ENCODE measurements at regions of chr10 and their contacts with region 1.

Region 1: DNA sequence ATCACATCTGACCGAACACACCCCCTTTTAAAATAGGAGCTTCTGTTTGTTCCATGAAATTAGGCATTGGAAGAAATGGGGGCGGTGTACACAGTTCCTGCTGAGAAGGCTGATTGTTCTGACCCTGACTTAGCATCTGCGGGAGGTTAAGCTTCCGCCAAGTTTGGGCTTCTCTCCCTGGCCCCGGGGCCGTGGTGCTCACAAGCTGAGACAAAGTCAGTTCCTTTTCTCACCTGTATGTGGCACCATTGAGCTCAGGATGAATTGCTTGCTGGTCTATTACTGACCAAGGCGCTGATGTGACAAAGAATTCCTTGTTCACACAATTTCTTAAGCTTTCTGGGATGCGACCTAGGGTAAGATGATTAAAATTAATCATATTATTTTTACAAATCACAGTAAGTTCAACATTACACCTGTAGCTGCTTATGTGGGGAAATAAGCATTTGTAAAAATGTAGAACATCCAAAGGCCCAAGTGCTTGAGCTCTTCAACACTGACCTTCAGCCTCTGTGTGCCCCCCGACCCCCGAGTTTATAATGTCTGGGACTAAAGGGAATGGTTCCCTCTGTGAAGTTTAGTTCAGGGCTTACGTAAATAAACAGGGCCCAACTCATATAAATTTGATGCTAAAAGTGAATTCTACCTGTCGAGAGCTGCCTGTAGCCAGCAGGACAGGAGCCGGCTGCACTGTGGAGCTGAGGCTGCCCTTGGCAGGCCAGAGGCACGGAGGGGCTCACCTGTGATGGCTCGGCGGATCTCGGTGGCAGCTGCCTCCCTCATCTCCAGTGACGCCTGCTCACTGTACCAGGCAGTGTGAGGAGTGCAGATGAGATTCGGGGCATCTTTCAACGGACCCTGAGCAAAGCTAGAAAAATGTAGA is 50.8 kb downstream of the ZRANB1 start:
- DNase-seq: peak; percentile 38 to 90
- ATAC-seq: peak; percentile 39 to 90 (median 76)
- H3K4me3 ChIP-seq: no peak overlapping the region
- H3K27ac ChIP-seq: peak overlapping the region in 1 of 10 donors; percentile 4
- H3K4me1 ChIP-seq: peaks cover 0 to 29% (median 5%) of the 10 kb centered on the region in 9 donors
- H3K27me3 ChIP-seq: no peaks in the 10 kb centered on the region
- CTCF ChIP-seq: peak; percentile 59 to 87 (median 79)

Region 2: DNA sequence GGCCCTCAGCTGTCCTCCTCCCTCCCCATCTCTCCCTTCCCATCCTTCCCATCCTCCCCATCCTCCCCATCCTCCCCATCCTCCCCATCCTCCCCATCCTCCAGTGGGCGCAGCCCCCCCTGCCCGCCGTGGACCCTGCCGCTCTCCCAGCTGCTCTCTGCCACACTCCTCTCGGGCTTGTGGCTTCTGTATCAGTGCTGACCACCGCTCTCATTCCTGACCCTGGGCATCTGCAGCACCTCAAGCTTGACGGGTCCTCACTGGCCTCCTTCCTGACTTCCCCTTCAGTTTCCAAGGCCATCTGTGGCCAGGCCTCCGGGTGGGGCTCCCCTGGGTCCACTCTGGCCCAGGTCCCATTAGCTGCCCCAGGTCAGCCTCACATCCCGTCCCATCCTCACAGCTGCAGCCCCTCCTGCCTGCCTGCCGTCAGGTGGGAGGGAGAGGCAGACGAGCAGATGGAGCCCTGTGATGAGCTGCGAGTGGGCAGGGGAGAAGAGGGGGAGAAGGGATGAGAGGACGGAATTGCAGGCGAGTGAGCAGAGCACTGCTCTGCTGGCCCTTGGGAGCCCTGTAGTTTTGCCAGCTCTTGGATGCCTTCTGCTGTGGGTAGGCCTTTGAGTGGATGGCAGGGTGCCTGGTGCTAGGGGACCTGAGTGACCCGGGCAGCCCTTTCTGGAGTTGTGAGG is 495.4 kb before region 1 on chr10:
- intact Hi-C with region 1: no loop called
- DNase-seq: peak; percentile 51 to 62
- ATAC-seq: peak; percentile 53 to 92 (median 84)
- H3K4me3 ChIP-seq: no peak overlapping the region
- H3K27ac ChIP-seq: no peak overlapping the region
- H3K4me1 ChIP-seq: peaks cover 0 to 5% (median 0%) of the 10 kb centered on the region in 9 donors
- H3K27me3 ChIP-seq: no peaks in the 10 kb centered on the region
- CTCF ChIP-seq: no peak

Region 3: DNA sequence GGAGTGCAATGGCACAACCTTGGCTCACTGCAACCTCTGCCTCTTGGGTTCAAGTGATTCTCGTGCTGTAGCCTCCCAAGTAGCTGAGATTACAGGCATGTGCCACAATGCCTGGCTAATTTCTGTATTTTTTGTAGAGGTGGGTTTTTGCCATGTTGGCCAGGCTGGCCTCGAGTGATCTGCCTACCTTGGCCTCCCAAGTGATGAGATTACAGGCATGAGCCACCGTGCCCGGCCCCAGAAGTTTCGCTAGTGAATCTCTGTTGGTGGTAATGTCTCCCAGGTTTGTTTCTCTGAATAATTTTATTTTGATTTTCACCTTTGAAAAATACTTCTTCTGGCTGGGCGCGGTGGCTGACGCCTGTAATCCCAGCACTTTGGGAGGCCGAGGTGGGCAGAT is 132.3 kb before region 1 on chr10:
- intact Hi-C with region 1: no loop called
- DNase-seq: no peak
- ATAC-seq: no peak
- H3K4me3 ChIP-seq: no peak overlapping the region
- H3K27ac ChIP-seq: no peak overlapping the region
- H3K4me1 ChIP-seq: peaks cover 0 to 14% (median 0%) of the 10 kb centered on the region in 9 donors
- H3K27me3 ChIP-seq: no peaks in the 10 kb centered on the region
- CTCF ChIP-seq: no peak

Region 4: DNA sequence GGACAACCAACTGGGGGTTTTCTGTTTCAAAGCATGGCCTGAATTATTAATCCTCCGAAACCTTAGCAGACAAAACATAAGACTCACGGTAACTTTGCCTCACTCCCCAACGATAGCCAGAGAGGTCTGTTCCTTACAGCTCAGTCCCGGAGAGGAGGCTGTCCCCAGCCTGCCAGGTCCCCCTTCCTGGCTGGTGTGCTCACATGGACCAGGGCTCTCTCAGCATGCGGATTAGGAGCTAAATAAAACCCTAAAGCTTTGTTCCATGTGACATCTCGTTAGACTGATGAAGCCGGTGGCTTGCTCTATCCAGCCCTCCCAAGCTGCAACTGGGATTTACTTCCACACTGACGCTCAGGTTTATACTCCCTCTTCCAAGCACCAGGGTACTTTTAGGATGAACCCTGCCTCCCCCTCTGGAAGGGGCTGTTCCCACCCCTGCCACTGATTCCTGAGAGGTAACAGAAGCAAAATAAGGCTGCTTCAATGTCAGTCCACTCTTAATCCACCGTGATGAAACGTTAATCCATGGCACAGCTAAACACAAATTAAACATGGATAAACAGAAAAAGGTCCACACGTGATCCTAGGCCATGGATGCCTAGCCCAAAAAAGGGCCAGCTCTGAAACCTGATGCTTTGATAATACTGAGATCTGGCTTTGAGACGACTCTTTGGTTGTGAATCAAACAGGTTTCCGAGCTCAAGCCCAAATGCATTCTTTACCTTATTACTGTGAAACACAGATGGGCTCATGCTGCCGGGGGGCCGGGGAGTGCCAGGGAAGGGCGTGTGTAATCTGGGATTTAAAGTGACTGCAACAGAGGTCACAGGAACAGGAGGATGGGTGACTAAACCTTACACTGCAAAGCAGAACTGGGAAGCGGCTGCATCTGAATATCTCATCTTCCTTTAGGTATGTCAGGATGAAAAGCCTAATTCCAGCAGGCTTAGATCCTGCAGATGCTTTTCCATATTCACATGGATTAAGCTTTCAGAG is 35.5 kb after region 1 on chr10:
- intact Hi-C with region 1: no loop called
- DNase-seq: peak in 1 of 2 donors; percentile 48
- ATAC-seq: peak; percentile 53 to 78 (median 69)
- H3K4me3 ChIP-seq: no peak overlapping the region
- H3K27ac ChIP-seq: peak overlapping the region in 8 of 10 donors; percentile 26 to 76 (median 52)
- H3K4me1 ChIP-seq: peaks cover 8 to 75% (median 44%) of the 10 kb centered on the region in 9 donors
- H3K27me3 ChIP-seq: no peaks in the 10 kb centered on the region
- CTCF ChIP-seq: no peak

Region 5: DNA sequence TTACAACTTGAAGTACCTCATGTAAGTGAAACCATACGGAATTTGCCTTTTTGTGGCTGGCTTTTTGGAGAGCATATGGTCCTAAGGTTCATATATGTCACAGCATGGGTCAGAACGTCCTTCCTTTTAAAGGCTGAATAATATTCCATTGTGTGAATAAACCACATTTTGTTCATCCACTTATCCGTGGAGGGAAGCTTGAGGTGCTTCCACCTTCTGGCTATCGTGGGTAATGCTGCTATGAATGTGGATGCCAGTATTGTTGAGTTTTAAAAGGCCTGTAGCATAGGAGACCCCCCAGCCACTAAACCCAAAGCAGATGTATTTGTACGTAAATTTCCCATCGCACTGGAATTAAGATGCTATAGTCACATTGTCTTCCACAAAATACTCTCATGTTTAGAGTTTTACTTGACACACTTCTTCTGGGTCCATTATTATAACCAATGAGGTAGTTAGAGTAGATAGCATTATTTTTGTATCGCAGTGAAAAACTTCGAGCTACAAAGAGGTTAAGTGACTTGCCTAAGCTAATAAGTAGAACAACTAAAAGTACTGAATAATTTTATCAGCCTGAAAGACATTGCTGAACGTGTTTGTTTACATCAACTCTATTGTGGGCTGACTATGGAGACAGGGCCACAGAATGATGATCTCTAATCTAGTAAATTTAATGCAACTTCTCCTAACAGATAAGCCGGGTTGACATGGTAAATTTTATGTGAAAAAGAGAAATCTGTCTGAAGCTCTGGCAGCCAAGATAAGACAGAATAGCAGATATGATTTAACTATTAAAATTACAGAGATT is 350.6 kb after region 1 on chr10:
- intact Hi-C with region 1: loop called in 1 of 10 experiments (anchors 5 kb)
- DNase-seq: no peak
- ATAC-seq: peak in 1 of 8 donors; percentile 25
- H3K4me3 ChIP-seq: no peak overlapping the region
- H3K27ac ChIP-seq: no peak overlapping the region
- H3K4me1 ChIP-seq: no peaks in the 10 kb centered on the region
- H3K27me3 ChIP-seq: peaks cover 0 to 8% (median 0%) of the 10 kb centered on the region in 7 donors
- CTCF ChIP-seq: peak; percentile 25 to 71 (median 61)